Ovary (tissue), 10 donors: ENCODE measurements at regions of chr1 and their contacts with region 1.

Region 1: GRCh38 chr1:90334137-90334536 is 339.2 kb downstream of the ZNF326 start:
- DNase-seq: no peak
- H3K4me3 ChIP-seq: no peak overlapping the region
- H3K27ac ChIP-seq: no peak overlapping the region
- H3K4me1 ChIP-seq: no peaks in the 10 kb centered on the region
- H3K27me3 ChIP-seq: no peaks in the 10 kb centered on the region
- CTCF ChIP-seq: no peak
- EP300 ChIP-seq: no peak
- POLR2A ChIP-seq: no peak

Region 2: DNA sequence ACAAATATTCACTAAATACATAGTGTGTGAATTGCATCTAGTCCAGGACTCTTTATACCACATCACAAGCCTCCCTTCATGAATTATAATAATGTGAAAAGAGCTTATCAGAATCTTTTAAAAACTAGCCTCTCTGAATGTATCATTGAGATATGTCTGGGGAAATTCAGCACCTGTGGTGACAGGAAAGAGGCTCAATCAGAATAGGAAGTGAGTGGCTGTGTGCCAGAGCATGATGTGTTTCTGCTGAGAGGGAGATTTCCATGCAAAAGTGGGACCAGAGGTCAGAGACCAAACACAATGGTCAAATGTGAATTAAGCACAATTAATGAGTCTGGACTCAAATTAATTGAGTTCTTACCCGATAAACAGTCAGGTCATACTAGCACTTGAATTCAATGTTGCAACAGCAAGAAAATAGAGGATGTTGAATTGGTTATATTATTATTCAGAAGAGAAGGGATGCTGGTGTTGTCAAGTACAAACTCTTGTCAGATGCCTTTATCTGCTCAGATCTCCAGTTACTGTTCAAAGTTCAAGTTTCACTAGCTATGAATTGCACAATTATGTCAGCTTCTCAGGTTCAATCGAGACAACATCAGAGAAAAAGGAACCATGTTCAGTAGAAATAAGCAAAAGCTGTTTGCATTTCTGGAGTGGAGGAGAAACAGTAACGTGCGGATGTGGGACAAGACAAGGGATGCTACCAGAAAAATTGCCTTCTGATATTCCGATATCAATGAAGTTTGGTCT is 113.0 kb before region 1 on chr1:
- intact Hi-C with region 1: loop called in 1 of 4 experiments (anchors 5 kb)
- DNase-seq: no peak
- H3K4me3 ChIP-seq: no peak overlapping the region
- H3K27ac ChIP-seq: no peak overlapping the region
- H3K4me1 ChIP-seq: no peaks in the 10 kb centered on the region
- H3K27me3 ChIP-seq: no peaks in the 10 kb centered on the region
- CTCF ChIP-seq: no peak
- EP300 ChIP-seq: no peak
- POLR2A ChIP-seq: no peak